ENCODE measurements at regions of chr3 and their contacts with region 1.

Region 1: DNA sequence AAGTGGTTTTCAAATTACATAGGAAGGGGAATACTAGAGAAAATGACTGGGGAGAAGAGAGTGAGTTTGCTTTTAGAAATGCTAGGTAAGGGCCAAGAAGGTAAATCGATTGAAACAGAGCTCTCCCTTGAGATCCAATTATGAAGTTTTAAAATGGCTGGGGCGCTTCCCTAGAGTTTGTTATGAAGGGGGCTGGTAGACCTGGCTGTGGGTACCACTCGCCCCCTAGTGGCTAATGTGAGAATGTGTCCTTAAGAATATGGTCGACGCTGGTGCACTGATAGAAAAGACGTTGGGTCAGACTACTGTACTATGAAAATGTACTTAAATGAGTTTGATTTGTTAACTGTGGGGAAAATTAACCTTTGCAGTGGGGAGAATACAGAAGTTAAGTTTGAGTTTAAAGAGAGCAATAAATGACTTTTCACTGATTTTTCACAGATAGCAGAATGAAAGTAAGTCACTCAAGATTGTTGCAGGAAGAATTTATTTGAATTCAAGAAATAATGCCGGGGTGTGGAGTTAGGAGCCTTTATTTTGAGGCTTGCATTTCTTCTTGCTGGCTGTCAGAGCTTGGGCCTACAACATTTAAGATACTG is 9.2 kb downstream of the TMPRSS7 start:
- DNase-seq: no peak
- ATAC-seq: peak; percentile 89
- H3K4me3 ChIP-seq: peak overlapping the region in 1 of 2 donors; percentile 21
- H3K27ac ChIP-seq: no peak overlapping the region
- H3K4me1 ChIP-seq: no peaks in the 10 kb centered on the region
- H3K27me3 ChIP-seq: no peaks in the 10 kb centered on the region

Region 2: DNA sequence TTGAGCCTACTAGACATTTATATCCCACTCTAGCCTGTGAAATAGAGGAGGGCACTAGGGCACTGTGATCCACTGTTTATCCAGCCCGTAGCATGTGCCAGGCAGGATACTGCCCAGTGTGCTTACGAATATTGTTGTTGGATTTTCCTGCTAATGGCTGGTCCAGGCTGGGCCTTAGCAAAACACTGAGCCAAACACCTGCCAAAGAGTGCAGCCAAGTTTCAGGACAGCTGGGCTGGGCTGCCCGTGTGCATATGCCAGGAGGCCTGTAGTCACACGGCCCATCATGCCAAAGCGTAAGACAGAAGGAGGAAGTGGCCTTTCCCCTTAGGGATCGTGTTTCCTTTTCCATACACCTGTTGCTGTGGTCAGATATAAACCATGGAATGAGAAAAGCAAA is 119.4 kb before region 1 on chr3:
- intact Hi-C with region 1: no loop called
- DNase-seq: peak; percentile 81 to 82
- ATAC-seq: peak; percentile 93
- H3K4me3 ChIP-seq: no peak overlapping the region
- H3K27ac ChIP-seq: peak overlapping the region in 1 of 2 donors; percentile 34
- H3K4me1 ChIP-seq: peaks cover 4 to 9% of the 10 kb centered on the region in 2 donors
- H3K27me3 ChIP-seq: no peaks in the 10 kb centered on the region

Region 3: GRCh38 chr3:111989061-111989678 is 54.5 kb before region 1 on chr3:
- intact Hi-C with region 1: loop called in 1 of 2 experiments (anchors 5 kb)
- DNase-seq: no peak
- ATAC-seq: peak; percentile 77
- H3K4me3 ChIP-seq: no peak overlapping the region
- H3K27ac ChIP-seq: no peak overlapping the region
- H3K4me1 ChIP-seq: no peaks in the 10 kb centered on the region
- H3K27me3 ChIP-seq: no peaks in the 10 kb centered on the region

Region 4: GRCh38 chr3:112143251-112143650 is 99.5 kb after region 1 on chr3:
- intact Hi-C with region 1: no loop called
- DNase-seq: no peak
- ATAC-seq: no peak
- H3K4me3 ChIP-seq: no peak overlapping the region
- H3K27ac ChIP-seq: no peak overlapping the region
- H3K4me1 ChIP-seq: no peaks in the 10 kb centered on the region
- H3K27me3 ChIP-seq: no peaks in the 10 kb centered on the region

Region 5: DNA sequence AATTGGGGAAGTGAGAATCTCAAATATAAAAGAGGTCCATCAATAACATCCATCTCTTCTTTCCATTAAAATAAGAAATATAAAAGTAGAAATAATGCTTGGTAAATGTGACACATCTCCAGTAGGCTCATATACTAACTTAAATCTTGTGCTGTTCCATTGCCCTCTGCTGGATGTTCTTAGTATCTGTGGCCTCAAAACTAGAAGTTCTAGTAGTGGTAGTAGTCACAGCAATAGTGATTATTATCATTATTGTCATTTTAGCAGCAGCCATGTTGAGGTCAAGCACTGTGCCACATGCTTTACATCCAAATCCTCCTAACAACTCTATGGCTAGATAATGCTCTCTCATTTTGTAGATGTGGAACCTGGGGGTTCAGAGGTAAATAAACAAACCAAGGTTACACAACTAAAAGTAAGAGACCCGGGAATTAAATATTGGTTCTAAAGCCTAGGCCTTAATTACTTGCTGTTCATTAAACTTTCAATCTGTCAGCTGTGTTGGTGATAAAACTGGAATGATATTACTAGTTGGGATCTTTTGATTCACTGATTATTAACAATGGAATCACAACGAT is 475.8 kb after region 1 on chr3:
- intact Hi-C with region 1: no loop called
- DNase-seq: no peak
- ATAC-seq: peak; percentile 88
- H3K4me3 ChIP-seq: no peak overlapping the region
- H3K27ac ChIP-seq: no peak overlapping the region
- H3K4me1 ChIP-seq: no peaks in the 10 kb centered on the region
- H3K27me3 ChIP-seq: no peaks in the 10 kb centered on the region

Measured in aorta (tissue), 5 donors.